ENCODE measurements at regions of chr19 and their contacts with region 1.

Region 1: GRCh38 chr19:13952154-13953035 is at the start of gene DCAF15:
- DNase-seq: peak; percentile 93 to 100 (median 99)
- ATAC-seq: peak; percentile 96 to 97
- H3K4me3 Mint-ChIP-seq: peak within 1 kb of the TSS; percentile 88 to 99 (median 93)
- H3K27ac Mint-ChIP-seq: peak within 1 kb of the TSS; percentile 88 to 98 (median 96)
- H3K4me1 Mint-ChIP-seq: peaks cover 7 to 28% (median 25%) of the 10 kb centered on the region in 4 donors
- H3K27me3 Mint-ChIP-seq: no peaks in the 10 kb centered on the region
- polyA plus RNA-seq, gene DCAF15: 2.9 to 6.0 (median 3.4) TPM

Region 2: DNA sequence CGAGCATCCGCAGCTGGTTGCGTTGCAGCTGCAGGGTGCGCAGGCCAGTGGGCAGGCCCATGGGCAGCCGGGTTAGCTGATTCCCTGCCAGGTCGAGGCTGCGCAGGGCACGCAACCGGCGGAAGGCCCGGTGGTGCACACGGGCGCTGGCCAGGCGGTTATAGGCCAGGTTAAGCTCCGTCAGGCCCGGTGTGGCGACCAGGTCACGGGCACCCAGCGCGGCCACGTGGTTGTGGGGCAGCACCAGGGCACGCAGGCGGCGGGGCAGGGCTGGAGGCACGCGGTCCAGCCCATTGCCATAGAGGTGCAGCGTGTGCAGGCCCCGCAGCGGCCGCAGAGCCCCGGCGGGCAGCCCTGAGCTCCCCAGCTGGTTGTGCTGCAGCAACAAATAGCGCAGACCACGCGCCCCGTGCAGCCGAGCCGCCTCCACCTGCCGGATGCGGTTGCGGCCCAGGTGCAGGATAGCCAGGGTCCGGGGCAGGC is 19.4 kb before region 1 on chr19:
- POLR2A ChIA-PET with region 1: no interaction called
- DNase-seq: no peak
- ATAC-seq: no peak
- H3K4me3 Mint-ChIP-seq: no peak overlapping the region
- H3K27ac Mint-ChIP-seq: no peak overlapping the region
- H3K4me1 Mint-ChIP-seq: peaks cover 5 to 19% (median 12%) of the 10 kb centered on the region in 4 donors
- H3K27me3 Mint-ChIP-seq: peaks cover 3 to 20% (median 6%) of the 10 kb centered on the region in 5 donors

Region 3: GRCh38 chr19:13978347-13978733 is 25.9 kb after region 1 on chr19:
- POLR2A ChIA-PET with region 1: interaction called, 56 read pairs
- DNase-seq: peak in 5 of 10 donors; percentile 23 to 70 (median 32)
- ATAC-seq: peak in 1 of 2 donors; percentile 44
- H3K4me3 Mint-ChIP-seq: peak overlapping the region in 9 of 10 donors; percentile 26 to 77 (median 61)
- H3K27ac Mint-ChIP-seq: peak overlapping the region; percentile 8 to 93 (median 80)
- H3K4me1 Mint-ChIP-seq: peaks cover 17 to 62% (median 46%) of the 10 kb centered on the region in 4 donors
- H3K27me3 Mint-ChIP-seq: no peaks in the 10 kb centered on the region

Region 4: GRCh38 chr19:13986348-13986904 is 34.0 kb after region 1 on chr19:
- POLR2A ChIA-PET with region 1: interaction called, 56 read pairs
- DNase-seq: peak; percentile 96 to 99 (median 98)
- ATAC-seq: peak; percentile 85 to 87
- H3K4me3 Mint-ChIP-seq: peak overlapping the region; percentile 61 to 84 (median 71)
- H3K27ac Mint-ChIP-seq: peak overlapping the region; percentile 91 to 99 (median 96)
- H3K4me1 Mint-ChIP-seq: peaks cover 33 to 91% (median 84%) of the 10 kb centered on the region in 4 donors
- H3K27me3 Mint-ChIP-seq: no peaks in the 10 kb centered on the region

Region 5: GRCh38 chr19:14006243-14006765 is 53.9 kb after region 1 on chr19 and contains the start of gene RFX1:
- POLR2A ChIA-PET with region 1: interaction called, 38 read pairs
- DNase-seq: peak; percentile 99 to 100 (median 100)
- ATAC-seq: peak; percentile 74 to 76
- H3K4me3 Mint-ChIP-seq: peak within 1 kb of the TSS; percentile 81 to 98 (median 91)
- H3K27ac Mint-ChIP-seq: peak within 1 kb of the TSS; percentile 95 to 100 (median 99)
- H3K4me1 Mint-ChIP-seq: peaks cover 18 to 49% (median 45%) of the 10 kb centered on the region in 4 donors
- H3K27me3 Mint-ChIP-seq: peaks cover 0 to 2% (median 0%) of the 10 kb centered on the region in 5 donors
- polyA plus RNA-seq, gene RFX1: 0.84 to 1.1 (median 1.0) TPM

Measured in naive thymus-derived CD8-positive, alpha-beta T cell (primary cell).